ENCODE measurements at regions of chr5 and their contacts with region 1.

Region 1: GRCh38 chr5:168987543-168988300 is 313.2 kb downstream of the SLIT3 start:
- DNase-seq: peak; percentile 58
- CTCF ChIP-seq: peak; percentile 86

Region 2: GRCh38 chr5:169296419-169297143 is 308.9 kb after region 1 on chr5:
- in situ Hi-C with region 1: loop called (anchors 25 kb)
- DNase-seq: no peak
- CTCF ChIP-seq: no peak

Region 3: GRCh38 chr5:169583424-169584204 is 595.9 kb after region 1 on chr5 and contains the start of gene SPDL1:
- in situ Hi-C with region 1: loop called (anchors 25 kb)
- DNase-seq: peak; percentile 87
- CTCF ChIP-seq: no peak

Region 4: GRCh38 chr5:170021506-170021905 is 1033.8 kb after region 1 on chr5:
- in situ Hi-C with region 1: no loop called
- DNase-seq: no peak
- CTCF ChIP-seq: no peak

Measured in GM13977 (cell line).